Cardiac septum (tissue), 1 donor: ENCODE measurements at regions of chr6 and their contacts with region 1.

Region 1: GRCh38 chr6:111666847-111667246 is 61.2 kb upstream of the TRAF3IP2 start:
- DNase-seq: no peak

Region 2: GRCh38 chr6:111683749-111684267 is 17.0 kb after region 1 on chr6:
- intact Hi-C with region 1: loop called (anchors 2 kb)
- DNase-seq: no peak